B cell (primary cell): ENCODE measurements at regions of chr12 and their contacts with region 1.

Region 1: GRCh38 chr12:51217968-51218606 is at the start of gene POU6F1:
- DNase-seq: peak; percentile 87
- ATAC-seq: peak; percentile 72
- H3K4me3 ChIP-seq: peak within 1 kb of the TSS; percentile 68 to 86 (median 71)
- H3K4me3 Mint-ChIP-seq: peak within 1 kb of the TSS; percentile 95
- H3K27ac ChIP-seq: peak within 1 kb of the TSS; percentile 85 to 93
- H3K27ac Mint-ChIP-seq: peak within 1 kb of the TSS; percentile 96
- H3K4me1 ChIP-seq: peaks cover 6 to 18% of the 10 kb centered on the region in 2 donors
- H3K4me1 Mint-ChIP-seq: peaks cover 19% of the 10 kb centered on the region
- H3K27me3 ChIP-seq: no peaks in the 10 kb centered on the region
- H3K27me3 Mint-ChIP-seq: no peaks in the 10 kb centered on the region
- CTCF ChIP-seq: peak; percentile 69
- total RNA-seq, gene POU6F1: 57.5 and 62.6 TPM in 2 replicates

Region 2: GRCh38 chr12:50924439-50925341 is 293.4 kb before region 1 on chr12:
- CTCF ChIA-PET with region 1: no interaction called
- POLR2A ChIA-PET with region 1: no interaction called
- intact Hi-C with region 1: loop called (anchors 5 kb)
- DNase-seq: peak; percentile 83
- ATAC-seq: peak; percentile 94
- H3K4me3 ChIP-seq: peak overlapping the region; percentile 75 to 99 (median 88)
- H3K4me3 Mint-ChIP-seq: peak overlapping the region; percentile 96
- H3K27ac ChIP-seq: peak overlapping the region; percentile 81 to 91
- H3K27ac Mint-ChIP-seq: peak overlapping the region; percentile 98
- H3K4me1 ChIP-seq: peaks cover 43 to 44% of the 10 kb centered on the region in 2 donors
- H3K4me1 Mint-ChIP-seq: peaks cover 63% of the 10 kb centered on the region
- H3K27me3 ChIP-seq: no peaks in the 10 kb centered on the region
- H3K27me3 Mint-ChIP-seq: no peaks in the 10 kb centered on the region
- CTCF ChIP-seq: no peak

Region 3: DNA sequence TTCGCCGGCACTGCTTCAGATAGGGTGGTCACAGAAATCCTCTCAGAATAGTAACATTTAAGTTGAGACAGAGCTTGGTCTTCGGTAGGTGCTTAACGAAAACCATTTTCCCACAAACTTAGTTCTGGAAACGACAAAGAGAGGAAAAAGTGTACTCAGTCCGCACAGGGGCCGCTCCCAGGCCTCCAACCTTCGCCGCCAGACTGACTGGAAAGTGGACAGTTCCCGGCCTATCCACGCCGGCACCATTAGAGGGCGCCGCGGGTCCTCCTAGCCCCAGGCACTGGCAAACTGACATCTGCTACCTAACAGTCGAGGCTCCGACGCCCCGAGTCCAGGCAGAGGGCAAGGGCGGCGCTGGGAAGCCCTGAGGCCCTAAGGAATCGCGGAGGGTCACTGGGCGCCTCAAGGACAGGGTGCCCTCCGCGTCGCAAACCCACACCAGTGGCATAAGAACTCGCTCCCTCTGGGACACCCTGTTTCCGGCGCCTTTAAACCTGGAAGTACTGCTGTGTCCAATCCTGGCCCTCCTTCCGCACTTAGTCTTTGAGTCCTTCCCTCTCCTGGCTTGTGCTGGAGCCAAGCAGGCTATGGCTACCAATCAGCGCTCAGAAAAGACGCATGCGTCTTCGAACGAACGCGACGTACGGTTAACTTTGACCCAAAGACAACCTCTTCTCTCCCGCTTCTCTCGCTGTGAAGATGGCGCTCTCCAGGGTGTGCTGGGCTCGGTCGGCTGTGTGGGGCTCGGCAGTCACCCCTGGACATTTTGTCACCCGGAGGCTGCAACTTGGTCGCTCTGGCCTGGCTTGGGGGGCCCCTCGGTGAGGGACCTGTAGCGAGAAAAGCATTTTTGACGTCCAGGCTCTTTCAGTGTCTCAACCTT is 170.2 kb before region 1 on chr12 and contains the start of gene LETMD1:
- CTCF ChIA-PET with region 1: interaction called, 5 read pairs
- POLR2A ChIA-PET with region 1: no interaction called
- intact Hi-C with region 1: loop called (anchors 1 kb)
- DNase-seq: peak; percentile 97
- ATAC-seq: peak; percentile 95
- H3K4me3 ChIP-seq: peak within 1 kb of the TSS; percentile 75 to 91 (median 79)
- H3K4me3 Mint-ChIP-seq: peak within 1 kb of the TSS; percentile 96
- H3K27ac ChIP-seq: peak within 1 kb of the TSS; percentile 81
- H3K27ac Mint-ChIP-seq: peak within 1 kb of the TSS; percentile 95
- H3K4me1 ChIP-seq: peaks cover 18 to 22% of the 10 kb centered on the region in 2 donors
- H3K4me1 Mint-ChIP-seq: peaks cover 29% of the 10 kb centered on the region
- H3K27me3 ChIP-seq: no peaks in the 10 kb centered on the region
- H3K27me3 Mint-ChIP-seq: no peaks in the 10 kb centered on the region
- CTCF ChIP-seq: peak; percentile 97
- total RNA-seq, gene LETMD1: 101 and 105 TPM in 2 replicates

Region 4: GRCh38 chr12:51172515-51173431 is 45.3 kb before region 1 on chr12 and contains the start of gene TFCP2:
- CTCF ChIA-PET with region 1: no interaction called
- POLR2A ChIA-PET with region 1: interaction called, 4 read pairs
- intact Hi-C with region 1: loop called (anchors 1 kb)
- DNase-seq: peak; percentile 97
- ATAC-seq: peak; percentile 99
- H3K4me3 ChIP-seq: peak within 1 kb of the TSS; percentile 75 to 100 (median 88)
- H3K4me3 Mint-ChIP-seq: peak within 1 kb of the TSS; percentile 83
- H3K27ac ChIP-seq: peak within 1 kb of the TSS; percentile 85 to 96
- H3K27ac Mint-ChIP-seq: peak within 1 kb of the TSS; percentile 77
- H3K4me1 ChIP-seq: peaks cover 16 to 19% of the 10 kb centered on the region in 2 donors
- H3K4me1 Mint-ChIP-seq: peaks cover 15% of the 10 kb centered on the region
- H3K27me3 ChIP-seq: no peaks in the 10 kb centered on the region
- H3K27me3 Mint-ChIP-seq: no peaks in the 10 kb centered on the region
- CTCF ChIP-seq: no peak
- total RNA-seq, gene TFCP2: 37.0 and 38.8 TPM in 2 replicates

Region 5: GRCh38 chr12:51238510-51239334 is 20.6 kb after region 1 on chr12 and contains the start of gene DAZAP2:
- CTCF ChIA-PET with region 1: interaction called, 20 read pairs
- POLR2A ChIA-PET with region 1: interaction called, 70 read pairs
- intact Hi-C with region 1: loop called (anchors 1 kb)
- DNase-seq: peak; percentile 98
- ATAC-seq: peak; percentile 92
- H3K4me3 ChIP-seq: peak within 1 kb of the TSS; percentile 69 to 100 (median 100)
- H3K4me3 Mint-ChIP-seq: peak within 1 kb of the TSS; percentile 93
- H3K27ac ChIP-seq: peak within 1 kb of the TSS; percentile 100
- H3K27ac Mint-ChIP-seq: peak within 1 kb of the TSS; percentile 100
- H3K4me1 ChIP-seq: peaks cover 24 to 34% of the 10 kb centered on the region in 2 donors
- H3K4me1 Mint-ChIP-seq: peaks cover 40% of the 10 kb centered on the region
- H3K27me3 ChIP-seq: no peaks in the 10 kb centered on the region
- H3K27me3 Mint-ChIP-seq: no peaks in the 10 kb centered on the region
- CTCF ChIP-seq: peak; percentile 31
- total RNA-seq, gene DAZAP2: 219 and 233 TPM in 2 replicates

Region 6: GRCh38 chr12:51326762-51327439 is 108.8 kb after region 1 on chr12:
- CTCF ChIA-PET with region 1: interaction called, 5 read pairs
- POLR2A ChIA-PET with region 1: interaction called, 8 read pairs
- intact Hi-C with region 1: loop called (anchors 2 kb)
- DNase-seq: peak; percentile 73
- ATAC-seq: peak; percentile 28
- H3K4me3 ChIP-seq: peak overlapping the region in 1 of 5 experiments; percentile 22
- H3K4me3 Mint-ChIP-seq: peak overlapping the region; percentile 35
- H3K27ac ChIP-seq: peak overlapping the region; percentile 59 to 64
- H3K27ac Mint-ChIP-seq: peak overlapping the region; percentile 83
- H3K4me1 ChIP-seq: peaks cover 72 to 79% of the 10 kb centered on the region in 2 donors
- H3K4me1 Mint-ChIP-seq: peaks cover 80% of the 10 kb centered on the region
- H3K27me3 ChIP-seq: no peaks in the 10 kb centered on the region
- H3K27me3 Mint-ChIP-seq: no peaks in the 10 kb centered on the region
- CTCF ChIP-seq: no peak

Region 7: GRCh38 chr12:53005986-53006809 is 1788.1 kb after region 1 on chr12 and contains the start of gene EIF4B:
- CTCF ChIA-PET with region 1: no interaction called
- POLR2A ChIA-PET with region 1: no interaction called
- intact Hi-C with region 1: loop called (anchors 5 kb)
- DNase-seq: peak; percentile 100
- ATAC-seq: peak; percentile 91
- H3K4me3 ChIP-seq: peak within 1 kb of the TSS; percentile 72 to 100 (median 82)
- H3K4me3 Mint-ChIP-seq: peak within 1 kb of the TSS; percentile 98
- H3K27ac ChIP-seq: peak within 1 kb of the TSS; percentile 79 to 92
- H3K27ac Mint-ChIP-seq: peak within 1 kb of the TSS; percentile 98
- H3K4me1 ChIP-seq: peaks cover 38 to 46% of the 10 kb centered on the region in 2 donors
- H3K4me1 Mint-ChIP-seq: peaks cover 44% of the 10 kb centered on the region
- H3K27me3 ChIP-seq: no peaks in the 10 kb centered on the region
- H3K27me3 Mint-ChIP-seq: no peaks in the 10 kb centered on the region
- CTCF ChIP-seq: no peak
- total RNA-seq, gene EIF4B: 631 and 674 TPM in 2 replicates